K562 (cell line): ENCODE measurements at regions of chr5 and their contacts with region 1.

Region 1: GRCh38 chr5:95743232-95743631 is 12.1 kb downstream of the RHOBTB3 start:
- DNase-seq: no peak
- ATAC-seq: peak; percentile 62
- H3K4me3 ChIP-seq: no peak overlapping the region
- H3K27ac ChIP-seq: no peak overlapping the region
- H3K4me1 ChIP-seq: peaks cover 4% of the 10 kb centered on the region in 2 experiments; a peak in 3 of 5 replicates
- H3K27me3 ChIP-seq: no peaks in the 10 kb centered on the region
- CTCF ChIP-seq: no peak
- EP300 ChIP-seq: no peak
- POLR2A ChIP-seq: 0 out of 2 replicates have a peak, but pooled peaks have one; percentile 50
- RAD21 ChIP-seq: no peak

Region 2: DNA sequence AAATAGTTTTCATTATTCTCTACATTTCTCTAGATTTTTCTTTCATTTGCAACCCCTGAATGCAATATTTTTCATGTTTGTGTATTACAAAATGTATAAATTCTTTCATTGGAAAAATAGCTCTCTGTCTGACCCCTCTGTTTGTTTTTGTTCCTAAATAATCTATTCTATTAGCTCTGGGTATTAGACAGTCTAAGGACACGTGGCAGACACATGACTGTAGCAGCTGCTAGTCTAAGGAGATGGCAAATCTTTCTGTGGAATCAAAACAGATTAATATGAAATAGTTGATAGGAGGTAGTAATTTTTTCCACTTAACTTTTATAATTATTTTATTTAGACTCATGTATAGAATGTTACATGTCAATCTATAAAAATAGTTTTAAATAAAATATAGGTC is 39.1 kb before region 1 on chr5:
- CTCF ChIA-PET with region 1: no interaction called
- POLR2A ChIA-PET with region 1: interaction called, 3 read pairs
- in situ Hi-C with region 1: no loop called
- intact Hi-C with region 1: loop called (anchors 5 kb)
- DNase-seq: no peak
- ATAC-seq: no peak
- H3K4me3 ChIP-seq: no peak overlapping the region
- H3K27ac ChIP-seq: no peak overlapping the region
- H3K4me1 ChIP-seq: peaks cover 0 to 18% of the 10 kb centered on the region in 2 experiments; a peak in 3 of 5 replicates
- H3K27me3 ChIP-seq: no peaks in the 10 kb centered on the region
- CTCF ChIP-seq: no peak
- EP300 ChIP-seq: no peak
- POLR2A ChIP-seq: no peak
- RAD21 ChIP-seq: no peak

Region 3: GRCh38 chr5:95866435-95867040 is 123.3 kb after region 1 on chr5:
- CTCF ChIA-PET with region 1: no interaction called
- POLR2A ChIA-PET with region 1: no interaction called
- in situ Hi-C with region 1: no loop called
- intact Hi-C with region 1: no loop called
- DNase-seq: no peak
- ATAC-seq: no peak
- H3K4me3 ChIP-seq: no peak overlapping the region
- H3K27ac ChIP-seq: no peak overlapping the region
- H3K4me1 ChIP-seq: peaks cover 3 to 10% of the 10 kb centered on the region in 2 experiments; a peak in 4 of 5 replicates
- H3K27me3 ChIP-seq: 0 out of 5 replicates have a peak, but pooled peaks cover 0 to 4% of the 10 kb centered on the region in 2 experiments
- CTCF ChIP-seq: no peak
- EP300 ChIP-seq: no peak
- POLR2A ChIP-seq: no peak
- RAD21 ChIP-seq: no peak